K562 (cell line): ENCODE measurements at regions of chr14 and their contacts with region 1.

Region 1: DNA sequence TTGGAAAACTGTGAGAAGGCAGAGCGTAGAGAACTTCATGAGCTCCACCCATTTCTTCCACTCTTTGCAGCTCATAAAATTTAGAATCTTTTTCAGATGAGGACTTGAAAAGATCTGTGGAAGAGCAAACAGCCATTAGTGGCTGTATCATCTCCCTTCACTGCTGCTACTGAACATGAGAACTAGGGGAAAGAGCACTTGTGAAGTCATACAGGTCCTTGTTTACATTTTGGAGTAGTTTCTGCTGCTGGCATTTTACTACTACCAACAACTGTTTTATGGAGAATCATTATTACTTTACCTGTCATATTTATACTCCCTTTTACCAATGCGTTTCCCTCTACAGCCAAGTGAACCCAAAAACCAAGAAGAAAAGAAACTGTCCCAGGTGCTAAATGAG is 41.0 kb downstream of the RPGRIP1 start:
- DNase-seq: no peak
- ATAC-seq: no peak
- H3K4me3 ChIP-seq: peak overlapping the region; percentile 35; the same call in 1 of the 2 replicates
- H3K27ac ChIP-seq: no peak overlapping the region
- H3K4me1 ChIP-seq: peaks cover 0 to 13% of the 10 kb centered on the region in 2 experiments; a peak in 3 of 5 replicates
- H3K27me3 ChIP-seq: no peaks in the 10 kb centered on the region
- CTCF ChIP-seq: no peak
- EP300 ChIP-seq: no peak
- POLR2A ChIP-seq: no peak
- RAD21 ChIP-seq: no peak

Region 2: GRCh38 chr14:21308479-21309237 is 12.3 kb before region 1 on chr14:
- CTCF ChIA-PET with region 1: no interaction called
- POLR2A ChIA-PET with region 1: interaction called, 10 read pairs
- in situ Hi-C with region 1: no loop called
- intact Hi-C with region 1: no loop called
- DNase-seq: peak; percentile 39 to 93 (median 56)
- ATAC-seq: peak; percentile 94
- H3K4me3 ChIP-seq: peak overlapping the region; percentile 32
- H3K27ac ChIP-seq: peak overlapping the region; percentile 98
- H3K4me1 ChIP-seq: peaks cover 0 to 10% of the 10 kb centered on the region in 2 experiments; a peak in 3 of 5 replicates
- H3K27me3 ChIP-seq: no peaks in the 10 kb centered on the region
- CTCF ChIP-seq: no peak
- EP300 ChIP-seq: no peak
- POLR2A ChIP-seq: peak; percentile 95
- RAD21 ChIP-seq: no peak